ENCODE measurements at regions of chr19 and their contacts with region 1.

Region 1: DNA sequence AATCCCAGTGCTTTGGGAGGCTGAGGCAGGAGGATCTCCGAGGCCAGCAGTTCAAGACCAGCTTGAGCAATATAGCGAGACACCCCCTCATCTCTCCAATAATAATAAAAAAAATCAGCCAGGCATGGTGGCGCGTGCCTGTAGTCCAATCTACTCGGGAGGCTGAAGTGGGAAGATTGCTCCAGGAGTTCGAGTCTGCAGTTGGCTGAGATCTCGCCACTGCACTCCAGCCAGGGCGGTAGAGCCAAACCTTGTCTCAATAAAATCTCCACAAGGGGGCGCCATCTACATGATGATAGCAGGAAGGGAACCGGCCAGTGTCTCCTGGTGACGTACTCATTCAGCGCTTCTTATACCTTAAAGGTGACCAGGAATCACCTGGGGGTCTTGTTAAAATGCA is 13.6 kb upstream of the C5AR1 start:
- DNase-seq: peak; percentile 68
- H3K4me3 Mint-ChIP-seq: no peak overlapping the region
- H3K27ac Mint-ChIP-seq: no peak overlapping the region
- H3K4me1 Mint-ChIP-seq: peaks cover 5% of the 10 kb centered on the region
- H3K27me3 Mint-ChIP-seq: no peaks in the 10 kb centered on the region

Region 2: DNA sequence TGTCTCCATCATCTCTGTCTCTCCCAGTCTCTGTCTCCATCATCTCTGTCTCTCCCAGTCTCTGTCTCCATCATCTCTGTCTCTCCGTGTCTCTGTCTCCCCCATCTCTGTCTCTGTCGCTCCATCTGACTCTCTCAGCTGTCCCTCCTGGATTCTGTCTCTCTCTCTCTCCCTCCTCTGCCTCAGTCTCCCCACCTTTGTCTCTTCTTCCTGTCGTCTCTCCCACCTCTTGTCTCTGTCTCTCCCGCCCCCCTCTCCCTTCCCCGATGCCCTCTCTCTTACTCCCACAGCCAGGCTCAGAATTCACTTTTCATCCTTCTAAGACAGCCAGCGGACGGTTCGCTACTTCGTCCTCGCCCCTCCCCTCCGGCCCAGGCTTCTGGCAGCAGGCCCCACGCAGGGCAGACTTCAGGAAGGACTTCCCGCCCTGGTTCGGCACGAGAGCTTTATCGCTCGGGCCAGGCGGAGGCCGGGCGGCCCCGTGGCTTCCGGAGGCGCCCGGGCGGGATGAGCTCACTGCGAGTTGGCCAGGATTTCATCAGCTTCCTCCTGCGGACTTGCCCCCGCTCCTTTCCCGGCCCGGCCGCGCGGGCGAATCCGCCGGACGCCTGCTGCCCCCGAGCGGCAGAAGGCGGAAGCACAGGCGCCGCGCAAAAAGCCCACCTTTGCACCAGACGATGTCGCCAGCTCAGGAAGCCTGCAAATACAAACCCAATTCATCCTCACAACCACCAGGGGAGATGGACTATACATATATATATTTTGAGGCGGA is 52.1 kb before region 1 on chr19:
- intact Hi-C with region 1: no loop called
- DNase-seq: peak; percentile 90
- H3K4me3 Mint-ChIP-seq: peak overlapping the region; percentile 80
- H3K27ac Mint-ChIP-seq: peak overlapping the region; percentile 93
- H3K4me1 Mint-ChIP-seq: peaks cover 14% of the 10 kb centered on the region
- H3K27me3 Mint-ChIP-seq: peaks cover 7% of the 10 kb centered on the region

Region 3: DNA sequence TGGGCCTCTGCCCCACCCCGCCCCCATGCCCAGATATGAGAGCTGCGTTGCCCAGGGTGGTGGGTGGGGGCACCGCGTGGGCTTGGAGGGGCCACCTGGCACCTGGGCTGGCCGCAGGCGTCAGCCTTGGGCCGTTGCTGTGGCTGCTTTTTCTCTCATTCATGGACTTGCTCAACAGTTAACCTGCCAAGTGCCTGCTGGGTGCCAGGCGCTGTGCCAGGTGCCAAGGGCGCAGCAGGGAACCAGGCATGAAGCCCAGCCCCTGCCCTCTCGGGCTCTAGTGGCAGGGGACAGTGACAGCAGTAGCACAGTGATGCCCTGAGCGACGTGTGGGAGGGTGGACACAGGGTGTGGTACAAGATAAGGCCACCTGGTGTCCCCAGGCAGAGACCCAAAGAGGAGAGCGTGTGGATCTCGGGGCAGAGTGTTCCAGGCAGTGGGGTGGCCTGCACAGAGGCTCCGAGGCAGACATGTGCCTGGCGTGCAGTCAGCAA is 81.2 kb after region 1 on chr19:
- intact Hi-C with region 1: no loop called
- DNase-seq: no peak
- H3K4me3 Mint-ChIP-seq: no peak overlapping the region
- H3K27ac Mint-ChIP-seq: no peak overlapping the region
- H3K4me1 Mint-ChIP-seq: peaks cover 10% of the 10 kb centered on the region
- H3K27me3 Mint-ChIP-seq: no peaks in the 10 kb centered on the region

Region 4: DNA sequence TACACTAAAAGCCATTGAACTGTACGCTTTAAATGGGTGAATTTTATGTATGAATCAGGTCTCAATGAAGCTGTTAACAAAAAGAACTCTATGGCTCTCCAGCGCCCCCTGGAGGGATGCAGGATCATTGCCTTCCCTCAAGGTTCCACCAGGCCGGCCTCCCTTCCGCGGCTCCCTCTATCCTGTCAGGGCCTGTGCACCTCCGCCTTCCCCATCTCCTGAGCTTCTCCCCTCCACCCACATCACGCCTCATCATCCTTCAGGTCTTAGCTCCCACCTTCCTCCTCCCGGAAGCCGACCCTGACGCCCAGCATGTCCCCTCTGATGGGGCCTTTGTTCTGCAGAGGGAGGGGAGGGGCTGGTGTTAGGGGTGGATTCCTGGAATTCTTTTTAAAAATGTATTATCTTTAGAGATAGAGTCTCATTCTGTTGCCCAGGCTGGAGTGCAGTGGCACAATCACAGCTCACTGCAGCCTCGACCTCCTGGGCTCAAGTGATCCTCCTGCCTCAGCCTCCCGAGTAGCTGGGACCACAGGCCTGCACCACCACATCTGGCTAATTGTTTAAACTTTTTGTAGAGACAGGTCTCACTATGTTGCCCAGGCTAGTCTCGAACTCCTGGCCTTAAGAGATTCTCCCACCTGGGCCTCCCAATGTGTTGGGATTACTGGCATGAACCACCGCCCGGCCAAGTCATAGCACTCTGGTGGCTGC is 95.6 kb after region 1 on chr19:
- intact Hi-C with region 1: loop called (anchors 1 kb)
- DNase-seq: peak; percentile 61
- H3K4me3 Mint-ChIP-seq: no peak overlapping the region
- H3K27ac Mint-ChIP-seq: no peak overlapping the region
- H3K4me1 Mint-ChIP-seq: no peaks in the 10 kb centered on the region
- H3K27me3 Mint-ChIP-seq: peaks cover 7% of the 10 kb centered on the region

Region 5: GRCh38 chr19:47428177-47428894 is 132.3 kb after region 1 on chr19:
- intact Hi-C with region 1: loop called (anchors 1 kb)
- DNase-seq: peak; percentile 78
- H3K4me3 Mint-ChIP-seq: no peak overlapping the region
- H3K27ac Mint-ChIP-seq: no peak overlapping the region
- H3K4me1 Mint-ChIP-seq: peaks cover 22% of the 10 kb centered on the region
- H3K27me3 Mint-ChIP-seq: peaks cover 30% of the 10 kb centered on the region

Region 6: GRCh38 chr19:47494729-47495128 is 198.7 kb after region 1 on chr19:
- intact Hi-C with region 1: no loop called
- DNase-seq: no peak
- H3K4me3 Mint-ChIP-seq: no peak overlapping the region
- H3K27ac Mint-ChIP-seq: no peak overlapping the region
- H3K4me1 Mint-ChIP-seq: no peaks in the 10 kb centered on the region
- H3K27me3 Mint-ChIP-seq: no peaks in the 10 kb centered on the region

Region 7: GRCh38 chr19:47707135-47707925 is 411.3 kb after region 1 on chr19:
- intact Hi-C with region 1: loop called (anchors 2 kb)
- DNase-seq: peak; percentile 57
- H3K4me3 Mint-ChIP-seq: no peak overlapping the region
- H3K27ac Mint-ChIP-seq: no peak overlapping the region
- H3K4me1 Mint-ChIP-seq: no peaks in the 10 kb centered on the region
- H3K27me3 Mint-ChIP-seq: peaks cover 2% of the 10 kb centered on the region